ENCODE measurements at regions of chr5 and their contacts with region 1.

Region 1: GRCh38 chr5:99032234-99033013 is 103.6 kb upstream of the CHD1 start:
- DNase-seq: peak; percentile 86
- H3K4me3 ChIP-seq: peak overlapping the region in 1 of 3 experiments; percentile 2
- H3K27ac ChIP-seq: peak overlapping the region; percentile 46
- H3K4me1 ChIP-seq: peaks cover 16% of the 10 kb centered on the region
- H3K27me3 ChIP-seq: no peaks in the 10 kb centered on the region
- CTCF ChIP-seq: peak; percentile 62 to 80
- POLR2A ChIP-seq: no peak

Region 2: DNA sequence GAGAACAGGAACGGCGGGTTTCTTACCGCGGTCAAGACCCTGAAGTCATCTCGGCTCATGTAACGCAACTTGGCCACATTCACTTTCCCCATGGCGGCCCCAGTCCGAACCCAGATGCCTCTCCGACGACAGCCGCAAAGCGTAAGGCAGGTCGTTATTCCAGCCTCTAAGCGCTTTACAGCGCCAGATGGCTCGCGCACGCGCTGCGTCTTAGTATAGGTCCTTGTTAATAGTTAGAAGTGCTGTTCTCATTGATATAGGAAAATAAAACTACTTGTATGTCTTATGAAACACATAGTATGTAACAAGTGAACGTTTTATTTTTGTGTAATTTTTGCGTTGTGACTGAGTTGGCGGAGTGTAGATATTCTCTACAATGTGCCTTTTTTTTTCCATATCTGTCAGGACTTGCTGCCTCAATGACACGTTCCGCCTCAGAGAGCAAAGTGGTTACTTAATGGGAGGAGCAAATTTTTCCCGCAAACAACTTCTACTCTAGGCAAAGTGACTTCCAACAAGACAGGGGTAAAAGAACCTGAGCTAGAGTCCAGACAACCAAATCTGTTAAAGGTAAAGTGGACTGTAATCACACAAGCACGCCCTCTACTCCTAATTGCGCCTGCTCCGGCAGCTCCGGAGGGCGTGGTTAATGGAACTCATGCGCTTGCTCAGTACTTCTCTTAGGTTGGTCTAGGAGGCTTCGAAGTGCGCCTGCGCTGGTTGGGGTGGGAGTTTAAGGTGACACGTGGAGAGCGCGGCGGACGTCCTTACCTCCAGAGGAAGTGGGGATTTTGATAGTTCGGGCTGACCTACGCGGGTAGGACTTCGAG is 1849.1 kb before region 1 on chr5 and contains the start of gene RIOK2:
- CTCF ChIA-PET with region 1: no interaction called
- POLR2A ChIA-PET with region 1: no interaction called
- dilution Hi-C with region 1: no loop called
- intact Hi-C with region 1: loop called (anchors 10 kb)
- DNase-seq: peak; percentile 99
- H3K4me3 ChIP-seq: peak within 1 kb of the TSS; percentile 83 to 97 (median 91)
- H3K27ac ChIP-seq: peak within 1 kb of the TSS; percentile 85
- H3K4me1 ChIP-seq: peaks cover 15% of the 10 kb centered on the region
- H3K27me3 ChIP-seq: no peaks in the 10 kb centered on the region
- CTCF ChIP-seq: no peak
- POLR2A ChIP-seq: peak; percentile 81
- total RNA-seq, gene RIOK2: 17.5 and 25.4 TPM in 2 replicates

Region 3: DNA sequence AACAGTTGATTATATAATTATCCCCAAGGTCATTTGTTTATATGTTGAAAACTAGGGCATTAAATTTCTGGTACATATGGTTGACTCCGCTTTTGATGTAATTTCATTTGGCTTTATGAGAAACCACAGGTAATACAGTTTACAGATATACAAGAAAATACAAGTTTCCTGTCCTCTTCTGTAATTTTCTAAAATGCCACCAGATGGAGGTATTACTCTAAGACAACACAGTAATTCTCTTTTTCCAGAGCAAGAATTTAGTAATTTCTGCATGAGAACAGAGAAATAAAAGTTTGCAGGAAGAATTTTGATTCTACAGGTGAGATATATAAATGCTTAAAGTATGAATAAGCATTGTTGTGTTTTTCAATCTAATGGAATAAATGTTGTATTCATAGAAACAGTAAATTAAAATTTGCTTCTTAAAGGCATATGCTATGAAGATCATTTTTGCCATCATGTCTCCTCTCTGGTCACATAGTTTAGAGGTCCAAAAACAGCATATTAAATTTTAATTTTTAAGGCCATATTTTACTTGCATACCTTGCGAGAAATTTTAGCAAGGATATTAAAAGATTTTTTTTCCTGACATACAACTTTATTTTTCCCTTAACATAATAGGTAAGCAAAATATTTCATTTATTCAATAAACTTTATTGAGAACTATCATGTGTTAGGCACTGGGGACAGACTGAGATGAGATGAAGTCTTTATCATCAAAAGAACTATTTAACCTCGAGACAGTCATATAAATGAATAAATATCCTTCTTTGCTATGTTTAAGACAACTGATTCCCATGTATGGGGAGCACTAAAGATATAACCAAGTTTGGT is 126.3 kb before region 1 on chr5:
- CTCF ChIA-PET with region 1: interaction called, 38 read pairs
- POLR2A ChIA-PET with region 1: no interaction called
- dilution Hi-C with region 1: no loop called
- intact Hi-C with region 1: loop called (anchors 1 kb)
- DNase-seq: peak; percentile 66
- H3K4me3 ChIP-seq: no peak overlapping the region
- H3K27ac ChIP-seq: peak overlapping the region; percentile 30
- H3K4me1 ChIP-seq: peaks cover 28% of the 10 kb centered on the region
- H3K27me3 ChIP-seq: no peaks in the 10 kb centered on the region
- CTCF ChIP-seq: peak; percentile 25 to 31
- POLR2A ChIP-seq: no peak

Region 4: GRCh38 chr5:98923966-98924365 is 108.5 kb before region 1 on chr5:
- CTCF ChIA-PET with region 1: interaction called, 11 read pairs
- POLR2A ChIA-PET with region 1: no interaction called
- dilution Hi-C with region 1: no loop called
- intact Hi-C with region 1: loop called (anchors 1 kb)
- DNase-seq: no peak
- H3K4me3 ChIP-seq: no peak overlapping the region
- H3K27ac ChIP-seq: no peak overlapping the region
- H3K4me1 ChIP-seq: peaks cover 12% of the 10 kb centered on the region
- H3K27me3 ChIP-seq: no peaks in the 10 kb centered on the region
- CTCF ChIP-seq: no peak
- POLR2A ChIP-seq: no peak

Region 5: DNA sequence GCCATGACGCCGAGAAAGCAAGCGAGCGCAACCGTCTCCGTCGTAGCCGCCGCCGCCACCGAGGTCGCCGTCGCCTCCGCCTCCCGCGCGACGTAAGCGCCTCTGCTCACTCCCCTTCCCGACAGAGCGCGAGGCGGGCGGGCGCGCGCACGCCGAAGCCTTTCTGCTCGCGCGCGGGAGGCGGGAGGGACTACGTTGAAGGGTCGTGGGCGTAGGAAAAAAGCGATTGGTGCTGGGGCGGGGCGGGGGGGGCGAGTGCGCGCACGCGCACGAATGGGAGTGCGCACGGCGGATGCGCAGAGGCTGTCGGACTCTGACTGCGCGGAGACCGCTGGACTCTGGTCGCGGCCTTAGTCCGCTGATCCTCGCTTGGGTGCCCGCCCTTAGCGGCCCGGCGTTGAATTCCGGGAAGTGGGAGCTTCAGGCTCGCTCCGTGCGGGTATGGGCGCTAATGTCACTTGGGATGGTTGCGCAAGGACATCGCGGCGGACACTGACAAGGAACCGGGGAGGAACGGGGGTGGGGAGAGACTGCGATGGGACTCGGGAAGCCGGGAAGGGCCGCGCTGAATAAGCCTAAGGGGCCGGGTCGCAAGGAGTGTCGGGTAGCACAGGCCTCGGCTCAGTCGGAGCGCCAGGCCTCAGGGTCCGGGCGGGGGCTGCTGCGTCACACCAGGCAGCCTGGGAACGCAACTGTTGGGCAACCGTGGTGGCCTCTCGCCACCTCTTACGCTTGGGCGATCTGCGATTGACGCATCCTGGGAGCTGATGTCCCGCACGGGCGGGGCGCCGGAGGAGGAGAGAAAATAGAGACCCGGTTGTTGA is 103.3 kb before region 1 on chr5 and contains the start of gene CHD1:
- CTCF ChIA-PET with region 1: interaction called, 11 read pairs
- POLR2A ChIA-PET with region 1: no interaction called
- dilution Hi-C with region 1: no loop called
- intact Hi-C with region 1: loop called (anchors 1 kb)
- DNase-seq: peak; percentile 97
- H3K4me3 ChIP-seq: peak within 1 kb of the TSS; percentile 63 to 86 (median 81)
- H3K27ac ChIP-seq: peak within 1 kb of the TSS; percentile 95
- H3K4me1 ChIP-seq: peaks cover 18% of the 10 kb centered on the region
- H3K27me3 ChIP-seq: no peaks in the 10 kb centered on the region
- CTCF ChIP-seq: no peak
- POLR2A ChIP-seq: peak; percentile 89
- total RNA-seq, gene CHD1: 44.3 and 48.9 TPM in 2 replicates

Region 6: DNA sequence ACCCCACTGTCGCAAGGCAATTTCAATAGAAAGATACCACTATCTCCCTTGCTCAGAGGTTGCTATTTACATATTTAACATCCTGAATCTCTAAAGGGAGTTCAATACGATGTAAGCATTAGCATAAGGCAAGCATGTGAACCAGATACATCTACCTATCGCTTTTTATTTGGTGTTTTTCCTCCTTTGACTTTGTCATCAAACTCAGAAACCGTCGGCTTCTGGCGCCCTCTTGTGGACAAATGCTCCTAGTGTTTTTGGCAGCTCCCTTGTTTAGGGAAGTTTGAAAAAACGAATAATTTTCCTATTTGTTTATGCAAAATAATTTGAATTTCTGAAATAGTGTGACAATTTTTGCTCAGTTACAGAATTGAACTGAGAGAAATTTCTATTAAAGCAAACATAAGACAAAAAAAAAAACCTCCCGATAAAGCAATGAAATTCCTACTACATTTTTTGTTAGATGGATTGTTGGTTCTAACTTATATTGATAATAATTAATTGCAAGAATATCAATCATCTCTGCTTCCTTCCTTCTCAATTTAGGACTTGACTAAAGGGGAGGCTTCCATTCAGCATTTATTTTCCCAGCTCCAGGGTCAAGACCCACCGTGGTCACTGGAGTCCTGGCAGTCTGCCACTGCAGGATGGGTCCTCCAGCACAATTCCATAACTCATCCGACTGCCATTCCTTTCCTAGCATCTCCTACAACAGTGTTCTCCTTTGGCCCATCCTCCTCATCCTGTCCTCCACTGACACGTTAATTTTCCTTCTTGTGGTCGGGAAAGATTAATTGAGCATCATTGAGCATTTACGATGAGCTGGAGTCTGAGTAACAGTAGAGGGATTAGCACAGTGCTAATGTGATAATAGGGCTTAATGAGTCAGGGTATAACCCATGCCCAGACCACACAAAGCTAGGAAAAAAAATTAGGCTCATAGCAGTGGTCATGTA is 28.2 kb after region 1 on chr5:
- CTCF ChIA-PET with region 1: interaction called, 14 read pairs
- POLR2A ChIA-PET with region 1: no interaction called
- dilution Hi-C with region 1: no loop called
- intact Hi-C with region 1: loop called (anchors 1 kb)
- DNase-seq: peak; percentile 77
- H3K4me3 ChIP-seq: no peak overlapping the region
- H3K27ac ChIP-seq: no peak overlapping the region
- H3K4me1 ChIP-seq: peaks cover 3% of the 10 kb centered on the region
- H3K27me3 ChIP-seq: no peaks in the 10 kb centered on the region
- CTCF ChIP-seq: peak; percentile 64 to 86
- POLR2A ChIP-seq: no peak